SK-N-SH (cell line): ENCODE measurements at regions of chr17 and their contacts with region 1.

Region 1: DNA sequence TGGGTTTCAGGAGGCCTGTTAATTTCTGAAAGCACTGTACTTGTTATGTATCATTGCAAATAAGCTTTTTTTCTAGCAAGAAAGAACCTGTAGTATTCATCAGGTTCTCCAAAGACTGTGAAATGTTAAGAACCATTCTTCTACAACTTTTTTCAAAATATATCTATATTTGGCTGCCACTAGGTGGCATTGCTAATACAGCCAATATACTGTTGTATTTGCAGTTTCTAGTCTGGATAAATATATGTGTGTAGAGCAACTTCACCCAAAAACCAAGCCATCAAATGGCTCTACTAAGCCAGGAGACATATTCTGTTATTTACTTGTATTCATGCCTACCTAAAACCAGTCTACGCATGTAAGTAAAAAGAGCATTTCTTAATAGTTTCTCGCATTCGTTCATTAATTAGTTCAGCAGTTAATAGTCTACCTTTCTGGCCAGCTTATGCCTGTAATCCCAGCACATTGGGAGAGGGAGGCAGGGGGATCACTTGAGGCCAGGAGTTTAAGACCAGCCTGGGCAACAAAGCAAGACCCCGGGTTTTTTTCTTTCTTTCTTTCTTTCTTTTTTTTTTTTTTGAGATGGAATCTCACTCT is 39.5 kb downstream of the VMP1 start:
- DNase-seq: peak; percentile 44
- H3K4me3 ChIP-seq: no peak overlapping the region; a peak in 1 of 4 replicates
- H3K27ac ChIP-seq: peak overlapping the region; percentile 4 to 54; a peak in 3 of 4 replicates
- H3K4me1 ChIP-seq: peaks cover 0 to 3% of the 10 kb centered on the region in 2 experiments; a peak in 1 of 4 replicates
- H3K27me3 ChIP-seq: no peaks in the 10 kb centered on the region
- CTCF ChIP-seq: peak; percentile 95
- EP300 ChIP-seq: no peak
- RAD21 ChIP-seq: peak; percentile 76

Region 2: GRCh38 chr17:59734226-59734625 is 12.7 kb before region 1 on chr17:
- CTCF ChIA-PET with region 1: interaction called, 10 read pairs
- POLR2A ChIA-PET with region 1: no interaction called
- DNase-seq: no peak
- H3K4me3 ChIP-seq: no peak overlapping the region
- H3K27ac ChIP-seq: no peak overlapping the region
- H3K4me1 ChIP-seq: no peaks in the 10 kb centered on the region
- H3K27me3 ChIP-seq: no peaks in the 10 kb centered on the region
- CTCF ChIP-seq: no peak
- EP300 ChIP-seq: no peak
- RAD21 ChIP-seq: no peak